A549 (cell line): ENCODE measurements at regions of chr7 and their contacts with region 1.

Region 1: DNA sequence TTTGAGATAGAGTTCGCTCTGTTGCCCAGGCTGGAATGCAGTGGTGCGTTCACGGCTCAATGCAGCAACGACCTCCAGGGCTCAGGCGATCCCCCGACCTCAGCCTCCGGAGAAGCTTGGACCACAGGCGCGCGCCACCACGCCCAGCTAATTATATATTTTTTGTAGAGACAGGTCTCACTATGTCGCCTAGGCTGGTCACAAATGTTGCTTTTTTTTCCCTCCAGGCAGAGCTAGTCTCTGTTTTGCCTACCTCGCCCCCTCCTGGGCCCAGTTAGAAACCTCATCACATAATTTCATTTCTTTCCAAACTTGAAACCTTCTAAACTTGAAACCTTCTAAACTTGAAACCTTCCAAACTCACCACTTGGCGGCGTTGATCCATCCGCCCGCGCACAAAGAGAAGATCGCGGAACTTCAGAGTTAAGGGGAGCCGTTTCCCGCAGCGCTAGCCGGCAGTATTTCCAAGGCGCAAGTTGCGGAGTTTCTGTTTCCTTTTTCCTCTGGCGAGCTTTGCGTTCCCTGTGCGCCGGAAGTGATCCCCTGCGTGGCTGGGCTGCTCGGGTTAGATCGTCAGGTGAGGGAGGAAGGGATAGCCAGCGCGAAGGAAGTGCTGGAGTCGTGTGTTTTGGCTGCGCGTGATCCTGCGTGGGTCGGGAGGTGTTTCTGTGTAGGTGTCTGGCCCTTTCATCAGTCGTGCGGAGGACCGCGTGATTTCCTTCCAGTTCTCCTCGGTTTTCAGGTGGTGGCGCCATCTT is at the start of gene SSBP1:
- DNase-seq: peak; percentile 85 to 98
- ATAC-seq: peak; percentile 96 to 98
- H3K4me3 ChIP-seq: peak within 1 kb of the TSS; percentile 85
- H3K27ac ChIP-seq: peak within 1 kb of the TSS; percentile 88 to 92
- H3K4me1 ChIP-seq: peaks cover 23% of the 10 kb centered on the region; the same call in 2 of the 3 replicates
- CTCF ChIP-seq: peak; percentile 95
- EP300 ChIP-seq: no peak
- POLR2A ChIP-seq: peak; percentile 92
- RAD21 ChIP-seq: peak; percentile 57 to 77
- polyA plus RNA-seq, gene SSBP1: 237 and 368 TPM in 2 replicates

Region 2: DNA sequence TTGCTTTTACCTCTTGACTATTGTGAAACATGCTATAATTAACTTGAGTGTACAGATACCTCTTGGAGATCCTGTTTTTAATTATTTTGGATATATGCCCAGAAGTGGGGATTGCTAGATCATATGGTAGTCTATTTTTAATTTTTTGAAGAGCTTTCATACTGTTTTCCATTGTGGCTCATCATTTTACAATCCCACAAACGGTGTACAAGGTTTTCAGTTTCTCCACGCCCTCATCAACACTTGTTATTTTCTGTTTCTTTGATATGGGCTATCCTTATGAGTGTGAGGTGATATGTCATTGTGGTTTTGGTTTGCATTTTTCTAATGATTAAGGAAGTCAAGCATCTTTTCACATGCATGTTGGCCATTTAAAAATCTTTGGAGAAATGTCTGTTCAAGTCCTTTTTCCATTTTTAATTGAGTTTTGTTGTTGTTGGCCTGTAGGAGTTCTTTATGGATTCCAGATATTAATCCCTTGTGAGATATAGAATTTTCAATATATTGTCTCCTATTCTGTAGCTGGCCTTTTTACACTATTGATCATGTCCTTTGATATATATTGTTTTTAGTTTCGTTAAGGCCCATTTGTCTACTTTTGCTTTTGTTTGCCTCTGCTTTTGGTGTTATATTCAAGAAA is 179.3 kb before region 1 on chr7:
- CTCF ChIA-PET with region 1: no interaction called
- POLR2A ChIA-PET with region 1: no interaction called
- DNase-seq: no peak
- ATAC-seq: no peak
- H3K4me3 ChIP-seq: no peak overlapping the region
- H3K27ac ChIP-seq: no peak overlapping the region
- H3K4me1 ChIP-seq: no peaks in the 10 kb centered on the region
- CTCF ChIP-seq: no peak
- EP300 ChIP-seq: no peak
- POLR2A ChIP-seq: no peak
- RAD21 ChIP-seq: no peak

Region 3: DNA sequence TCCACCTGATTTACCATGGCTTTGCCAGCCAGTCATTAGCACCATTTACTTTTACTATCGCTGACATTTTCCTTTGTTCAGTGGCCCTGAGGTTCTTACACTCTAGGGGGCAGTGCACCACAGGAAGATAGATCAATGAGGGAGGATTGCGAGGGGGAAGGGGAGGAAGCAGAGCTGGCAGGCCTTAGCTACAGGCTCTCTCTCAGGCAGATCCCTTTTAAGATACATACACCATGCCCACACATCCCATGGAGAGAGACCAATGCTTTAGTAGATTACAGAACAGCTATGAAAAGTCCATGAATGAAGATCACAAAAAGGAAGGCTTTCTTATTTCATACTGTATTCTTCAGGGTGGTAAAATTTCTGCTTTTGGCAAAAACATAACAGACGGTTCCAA is 83.5 kb before region 1 on chr7:
- CTCF ChIA-PET with region 1: interaction called, 30 read pairs
- POLR2A ChIA-PET with region 1: interaction called, 7 read pairs
- DNase-seq: peak; percentile 67 to 76
- ATAC-seq: peak; percentile 78 to 86
- H3K4me3 ChIP-seq: no peak overlapping the region
- H3K27ac ChIP-seq: no peak overlapping the region
- H3K4me1 ChIP-seq: peaks cover 4% of the 10 kb centered on the region; the same call in 2 of the 3 replicates
- CTCF ChIP-seq: peak; percentile 75
- EP300 ChIP-seq: no peak
- POLR2A ChIP-seq: no peak
- RAD21 ChIP-seq: peak; percentile 78

Region 4: GRCh38 chr7:141660259-141660658 is 77.8 kb before region 1 on chr7:
- CTCF ChIA-PET with region 1: interaction called, 30 read pairs
- POLR2A ChIA-PET with region 1: no interaction called
- DNase-seq: no peak
- ATAC-seq: no peak
- H3K4me3 ChIP-seq: no peak overlapping the region
- H3K27ac ChIP-seq: no peak overlapping the region
- H3K4me1 ChIP-seq: peaks cover 22% of the 10 kb centered on the region
- CTCF ChIP-seq: no peak
- EP300 ChIP-seq: no peak
- POLR2A ChIP-seq: no peak
- RAD21 ChIP-seq: no peak

Region 5: DNA sequence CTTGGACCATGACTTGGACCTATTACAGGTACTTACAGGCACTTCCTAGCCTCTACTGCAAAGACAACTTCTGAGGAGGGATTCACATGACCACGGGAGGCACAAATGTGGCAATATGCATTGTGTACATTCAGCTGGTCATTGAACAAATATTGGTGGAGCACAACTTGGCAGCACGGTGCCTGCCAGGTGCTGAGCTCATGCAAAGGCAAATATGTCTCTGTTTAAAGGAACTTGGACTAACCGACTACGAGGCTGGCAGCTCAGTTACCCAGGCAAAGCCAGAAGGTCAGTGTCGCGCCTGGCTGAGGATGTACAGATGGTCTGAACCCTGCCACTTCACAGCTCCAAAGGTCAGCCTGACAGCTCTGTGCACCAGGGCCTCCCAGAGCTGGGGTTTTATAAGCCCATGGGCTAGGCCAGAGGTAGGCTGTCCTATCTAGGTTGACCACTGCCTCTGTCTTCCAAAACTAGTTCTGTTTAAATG is 42.2 kb before region 1 on chr7:
- CTCF ChIA-PET with region 1: interaction called, 21 read pairs
- POLR2A ChIA-PET with region 1: interaction called, 16 read pairs
- DNase-seq: peak in 1 of 2 experiments; percentile 71
- ATAC-seq: peak; percentile 77 to 85
- H3K4me3 ChIP-seq: no peak overlapping the region
- H3K27ac ChIP-seq: peak overlapping the region; percentile 58 to 71
- H3K4me1 ChIP-seq: peaks cover 62% of the 10 kb centered on the region
- CTCF ChIP-seq: no peak
- EP300 ChIP-seq: peak; percentile 15 to 46; a peak in 1 of 5 replicates
- POLR2A ChIP-seq: no peak
- RAD21 ChIP-seq: no peak

Region 6: DNA sequence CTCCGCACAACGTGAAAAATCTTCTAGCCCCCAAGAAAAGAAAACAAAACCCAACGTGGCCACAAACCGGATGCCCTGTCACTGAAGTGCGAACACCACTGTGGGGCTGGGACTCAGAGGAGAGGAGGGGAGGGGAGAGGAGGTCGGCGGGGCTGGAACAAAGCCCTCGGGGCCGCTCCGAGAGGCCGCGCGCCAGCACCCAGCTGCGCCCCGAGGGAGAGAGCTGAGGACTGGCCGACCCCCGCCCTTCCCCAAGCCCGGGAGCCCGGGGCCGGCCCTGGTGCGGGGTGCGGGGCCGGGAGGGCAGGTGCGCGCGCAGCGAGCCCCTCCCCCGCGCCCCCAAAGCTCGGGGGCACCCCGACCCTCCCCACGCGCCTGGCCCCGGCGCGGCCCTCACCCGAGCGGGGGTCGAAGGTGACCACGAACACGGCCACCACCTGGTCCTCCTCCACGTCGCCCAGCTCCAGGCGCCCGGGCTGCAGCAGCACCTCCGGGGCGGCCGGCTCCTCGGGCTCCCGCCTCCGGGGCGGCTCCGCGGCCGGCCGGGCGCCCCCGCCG is 36.4 kb before region 1 on chr7:
- CTCF ChIA-PET with region 1: interaction called, 21 read pairs
- POLR2A ChIA-PET with region 1: interaction called, 16 read pairs
- DNase-seq: peak in 1 of 2 experiments; percentile 35
- ATAC-seq: peak; percentile 75
- H3K4me3 ChIP-seq: peak overlapping the region; percentile 85
- H3K27ac ChIP-seq: peak overlapping the region; percentile 85 to 95
- H3K4me1 ChIP-seq: peaks cover 72% of the 10 kb centered on the region
- CTCF ChIP-seq: no peak
- EP300 ChIP-seq: no peak
- POLR2A ChIP-seq: no peak
- RAD21 ChIP-seq: no peak

Region 7: GRCh38 chr7:141709749-141710148 is 28.3 kb before region 1 on chr7:
- CTCF ChIA-PET with region 1: interaction called, 15 read pairs
- POLR2A ChIA-PET with region 1: interaction called, 4 read pairs
- DNase-seq: no peak
- ATAC-seq: no peak
- H3K4me3 ChIP-seq: no peak overlapping the region
- H3K27ac ChIP-seq: no peak overlapping the region
- H3K4me1 ChIP-seq: peaks cover 9% of the 10 kb centered on the region
- CTCF ChIP-seq: no peak
- EP300 ChIP-seq: no peak
- POLR2A ChIP-seq: no peak
- RAD21 ChIP-seq: no peak

Region 8: DNA sequence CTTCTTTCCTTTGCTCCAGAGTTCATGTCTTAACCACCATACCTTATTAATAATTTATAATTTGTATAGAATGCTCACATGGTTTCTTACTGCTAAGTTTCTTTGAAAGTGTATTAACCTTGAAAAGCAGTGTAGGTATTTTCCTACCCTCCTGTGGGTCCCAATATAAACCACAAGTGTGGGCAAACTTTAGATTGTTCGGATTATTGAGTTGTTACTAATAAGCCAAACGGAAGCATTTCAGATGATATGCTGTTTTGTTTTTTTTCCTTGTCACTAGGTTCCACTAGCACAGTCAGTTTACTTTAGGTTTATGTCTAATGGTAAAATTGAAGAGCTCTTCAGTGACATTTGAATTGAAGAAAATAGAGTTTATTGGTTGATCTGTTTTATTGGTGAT is 10.4 kb after region 1 on chr7:
- CTCF ChIA-PET with region 1: interaction called, 29 read pairs
- POLR2A ChIA-PET with region 1: interaction called, 8 read pairs
- DNase-seq: no peak
- ATAC-seq: no peak
- H3K4me3 ChIP-seq: no peak overlapping the region
- H3K27ac ChIP-seq: no peak overlapping the region
- H3K4me1 ChIP-seq: no peaks in the 10 kb centered on the region
- CTCF ChIP-seq: no peak
- EP300 ChIP-seq: no peak
- POLR2A ChIP-seq: no peak
- RAD21 ChIP-seq: no peak